ENCODE measurements at regions of chr11 and their contacts with region 1.

Region 1: DNA sequence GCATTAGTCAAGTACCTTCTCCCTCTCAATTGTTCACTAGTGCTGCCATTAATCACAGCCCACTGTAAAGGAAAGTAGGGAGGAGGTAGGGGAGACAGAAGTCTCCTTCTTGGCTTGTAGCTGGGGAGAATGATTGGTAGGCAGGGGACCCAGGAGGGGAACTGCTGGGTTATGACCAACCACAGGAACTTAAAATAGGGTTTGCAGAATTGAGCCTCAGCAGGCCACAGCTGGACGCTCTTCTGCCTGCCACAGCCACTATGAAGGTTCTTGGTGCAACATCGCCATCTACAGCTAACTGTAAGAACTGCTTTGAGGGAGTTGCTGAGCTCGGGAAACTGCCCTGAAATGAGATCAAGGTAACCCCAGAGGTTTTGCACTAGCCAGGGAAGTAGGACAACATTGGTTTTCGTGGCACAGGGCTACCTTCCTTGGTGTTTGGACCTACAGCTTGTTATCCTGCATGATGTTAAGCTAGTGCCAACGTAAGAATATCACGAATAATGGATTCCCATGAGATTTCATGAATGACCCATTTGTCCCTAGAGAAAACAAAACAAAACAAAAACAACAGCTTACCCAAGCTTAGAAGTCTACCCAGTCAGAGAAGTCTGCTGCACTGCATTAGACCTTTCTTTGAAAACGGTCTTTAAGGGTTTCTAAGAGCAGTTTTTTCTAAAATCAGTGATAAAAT is 787.1 kb upstream of the API5 start:
- DNase-seq: peak; percentile 47
- ATAC-seq: peak; percentile 84
- H3K4me3 ChIP-seq: no peak overlapping the region
- H3K27ac ChIP-seq: no peak overlapping the region
- H3K4me1 ChIP-seq: no peaks in the 10 kb centered on the region
- H3K27me3 ChIP-seq: no peaks in the 10 kb centered on the region
- CTCF ChIP-seq: peak; percentile 82

Region 2: DNA sequence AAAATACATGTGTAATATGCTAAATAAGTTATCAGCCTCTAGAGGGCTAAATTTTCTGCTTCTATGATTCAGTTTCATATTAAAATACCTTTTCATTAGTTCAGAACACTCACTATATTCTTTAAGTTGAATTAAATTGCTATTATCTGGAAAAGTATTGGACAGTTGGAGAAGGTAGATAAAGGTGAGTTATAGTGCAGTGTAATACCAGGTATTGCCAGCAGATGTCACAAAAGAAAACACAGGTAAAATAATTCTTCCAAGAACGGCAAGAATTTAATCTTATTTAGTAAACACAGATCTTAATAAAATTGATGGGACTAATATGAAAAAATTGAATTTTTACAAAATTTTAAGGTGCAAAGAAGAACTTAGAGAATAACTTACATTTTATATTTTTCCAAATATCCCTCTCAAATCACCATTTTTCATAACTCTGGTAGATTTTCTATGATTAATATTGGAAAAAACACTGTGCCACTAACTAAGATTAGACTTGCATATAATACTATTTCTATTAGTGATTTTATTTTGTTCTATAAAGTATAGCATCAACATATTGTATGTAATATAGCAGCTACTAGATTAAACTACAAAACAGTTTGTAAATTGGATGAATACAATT is 1063.5 kb before region 1 on chr11:
- CTCF ChIA-PET with region 1: interaction called, 6 read pairs
- POLR2A ChIA-PET with region 1: no interaction called
- in situ Hi-C with region 1: no loop called
- intact Hi-C with region 1: loop called (anchors 5 kb)
- DNase-seq: peak; percentile 5
- ATAC-seq: no peak
- H3K4me3 ChIP-seq: no peak overlapping the region
- H3K27ac ChIP-seq: no peak overlapping the region
- H3K4me1 ChIP-seq: no peaks in the 10 kb centered on the region
- H3K27me3 ChIP-seq: peaks cover 4% of the 10 kb centered on the region; the same call in 1 of the 2 replicates
- CTCF ChIP-seq: peak; percentile 69; the same call in 1 of the 2 replicates

Region 3: GRCh38 chr11:41498726-41499125 is 1026.0 kb before region 1 on chr11:
- CTCF ChIA-PET with region 1: no interaction called
- POLR2A ChIA-PET with region 1: no interaction called
- in situ Hi-C with region 1: no loop called
- intact Hi-C with region 1: loop called (anchors 5 kb)
- DNase-seq: no peak
- ATAC-seq: no peak
- H3K4me3 ChIP-seq: no peak overlapping the region
- H3K27ac ChIP-seq: no peak overlapping the region
- H3K4me1 ChIP-seq: no peaks in the 10 kb centered on the region
- H3K27me3 ChIP-seq: no peaks in the 10 kb centered on the region
- CTCF ChIP-seq: peak; percentile 42; the same call in 1 of the 2 replicates

Region 4: DNA sequence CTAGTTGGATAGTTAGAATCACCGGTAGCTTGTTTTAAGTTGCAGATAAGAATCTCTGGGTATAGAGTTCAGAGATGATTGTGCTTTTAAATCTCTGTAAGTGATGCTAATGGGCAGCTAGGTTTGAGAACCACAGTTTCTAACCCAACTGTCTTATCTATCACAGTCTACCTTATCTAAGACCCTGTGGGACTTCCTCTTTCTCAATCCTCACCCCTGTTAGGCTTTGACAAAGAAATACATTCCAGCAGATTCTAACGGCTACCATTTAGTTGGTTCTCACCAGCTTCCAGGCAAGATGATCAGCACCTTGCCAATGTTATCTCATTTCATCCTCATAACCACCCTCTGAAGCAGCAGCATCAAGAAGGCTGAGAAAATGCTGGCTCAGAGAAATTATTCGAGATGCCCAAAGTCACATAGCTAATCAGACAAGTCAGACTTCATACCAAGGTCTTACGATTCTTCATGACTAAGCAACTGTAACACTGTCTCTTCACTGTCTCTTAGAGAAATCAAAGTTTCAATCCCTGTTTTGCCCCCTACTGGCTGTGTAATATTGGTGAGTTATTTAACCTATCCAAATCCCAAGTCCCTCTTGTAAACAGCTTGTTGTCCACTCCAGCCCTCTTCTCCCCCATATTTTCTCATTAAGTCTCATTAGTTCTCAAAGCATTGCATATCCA is 594.7 kb after region 1 on chr11:
- CTCF ChIA-PET with region 1: no interaction called
- POLR2A ChIA-PET with region 1: no interaction called
- in situ Hi-C with region 1: no loop called
- intact Hi-C with region 1: no loop called
- DNase-seq: no peak
- ATAC-seq: no peak
- H3K4me3 ChIP-seq: no peak overlapping the region
- H3K27ac ChIP-seq: no peak overlapping the region
- H3K4me1 ChIP-seq: no peaks in the 10 kb centered on the region
- H3K27me3 ChIP-seq: no peaks in the 10 kb centered on the region
- CTCF ChIP-seq: no peak